Sciatic nerve (tissue), 2 donors: ENCODE measurements at regions of chr1 and their contacts with region 1.

Region 1: GRCh38 chr1:19057182-19057779 is 100.8 kb upstream of the IFFO2 start:
- DNase-seq: no peak
- ATAC-seq: no peak

Region 2: GRCh38 chr1:18614069-18614735 is 443.1 kb before region 1 on chr1:
- intact Hi-C with region 1: loop called (anchors 5 kb)
- DNase-seq: no peak
- ATAC-seq: no peak

Region 3: DNA sequence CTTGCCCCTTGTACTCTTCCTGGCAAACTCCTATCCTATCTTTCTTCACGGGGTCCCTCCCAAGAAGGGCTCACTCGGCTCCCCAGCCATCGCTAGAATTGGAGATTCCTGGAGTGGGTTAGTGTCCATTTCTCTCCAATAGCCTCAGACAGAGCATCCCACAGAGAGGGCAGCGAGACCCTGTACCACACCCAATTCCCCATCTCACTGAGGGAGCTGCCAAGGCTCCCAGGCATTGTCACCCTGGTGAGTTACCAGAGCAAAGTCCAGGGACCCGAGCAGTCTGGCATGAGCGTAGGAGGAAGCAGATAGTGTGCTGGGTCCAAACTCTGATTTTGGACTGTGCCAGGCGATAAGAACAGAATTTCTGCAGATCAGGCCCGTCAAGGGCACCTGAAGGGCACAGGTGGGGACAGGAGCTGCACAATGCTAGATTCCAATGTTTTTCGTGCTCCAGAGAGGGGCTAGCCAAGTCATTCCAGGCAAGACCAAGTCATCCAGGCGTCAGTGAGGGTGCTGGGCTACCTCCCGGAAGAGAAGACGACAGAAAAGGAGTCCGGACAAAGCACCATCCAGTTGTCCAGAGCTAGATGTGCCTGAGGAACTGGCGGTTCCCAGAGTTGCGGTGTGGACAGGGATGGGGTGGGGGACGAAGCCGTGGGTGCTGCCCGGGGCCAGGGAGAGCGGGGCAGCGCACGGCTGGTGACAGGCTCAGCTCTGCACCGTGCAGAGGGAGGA is 216.0 kb after region 1 on chr1:
- intact Hi-C with region 1: no loop called
- DNase-seq: peak; percentile 33
- ATAC-seq: no peak